ENCODE measurements at regions of chr15 and their contacts with region 1.

Region 1: GRCh38 chr15:57591646-57592367 is at the start of gene MYZAP:
- DNase-seq: peak; percentile 77
- ATAC-seq: peak; percentile 56
- total RNA-seq, gene MYZAP: 869 TPM

Region 2: GRCh38 chr15:57227899-57228298 is 363.9 kb before region 1 on chr15:
- intact Hi-C with region 1: no loop called
- DNase-seq: no peak
- ATAC-seq: peak; percentile 59

Region 3: DNA sequence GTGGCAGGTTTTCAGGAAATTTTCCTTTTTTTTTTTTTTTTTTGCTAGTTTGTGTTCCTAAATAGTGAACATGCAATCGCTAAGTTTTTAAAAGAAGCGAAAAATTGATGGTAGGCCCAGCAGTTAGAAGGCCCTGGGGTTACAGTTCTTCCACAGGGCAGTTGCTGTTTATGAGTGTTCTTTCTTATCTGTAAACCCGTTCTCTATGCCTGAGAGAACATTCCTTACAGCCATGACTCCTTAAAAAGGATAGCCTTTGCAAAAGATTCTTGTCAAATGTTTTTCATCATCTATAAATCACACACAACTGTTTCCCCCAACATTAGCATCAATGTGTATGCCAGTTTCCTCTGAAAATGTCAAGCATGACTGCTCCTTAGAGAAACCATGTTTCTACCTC is 23.9 kb before region 1 on chr15:
- intact Hi-C with region 1: loop called (anchors 2 kb)
- DNase-seq: no peak
- ATAC-seq: no peak

Region 4: GRCh38 chr15:57611938-57612337 is 20.1 kb after region 1 on chr15:
- intact Hi-C with region 1: loop called (anchors 2 kb)
- DNase-seq: no peak
- ATAC-seq: peak; percentile 60